OCI-LY7 (cell line): ENCODE measurements at regions of chr17 and their contacts with region 1.

Region 1: DNA sequence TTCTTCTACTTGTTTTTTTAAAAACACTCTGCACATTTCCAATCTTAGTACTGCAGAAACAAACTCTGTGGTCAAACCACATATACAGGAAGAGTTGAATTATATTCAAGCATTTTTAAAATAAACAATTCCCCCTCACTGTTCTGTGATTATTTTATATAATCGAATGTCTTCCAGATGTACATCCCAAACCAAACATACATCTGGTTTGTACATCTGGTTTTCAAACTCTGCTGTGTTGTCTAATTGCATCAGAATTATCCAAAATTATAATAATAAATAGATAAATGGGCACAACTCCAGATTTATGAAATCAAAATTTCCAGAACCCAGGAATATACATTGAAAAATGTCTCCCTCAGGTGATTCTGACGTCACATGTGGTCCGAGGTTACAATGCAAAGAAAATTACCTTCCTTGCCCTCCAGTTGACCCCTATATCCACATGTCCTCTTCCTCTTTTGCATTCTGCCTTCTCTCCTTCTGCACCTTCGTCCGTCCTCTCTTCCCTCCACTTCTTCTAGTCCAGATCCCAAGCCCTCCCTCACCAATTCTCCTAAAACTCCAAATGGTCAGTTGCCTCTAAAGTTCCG is 13.3 kb upstream of the CCDC144A start:
- DNase-seq: no peak
- H3K4me3 ChIP-seq: no peak overlapping the region
- H3K27ac ChIP-seq: no peak overlapping the region
- H3K4me1 ChIP-seq: no peaks in the 10 kb centered on the region
- CTCF ChIP-seq: no peak

Region 2: DNA sequence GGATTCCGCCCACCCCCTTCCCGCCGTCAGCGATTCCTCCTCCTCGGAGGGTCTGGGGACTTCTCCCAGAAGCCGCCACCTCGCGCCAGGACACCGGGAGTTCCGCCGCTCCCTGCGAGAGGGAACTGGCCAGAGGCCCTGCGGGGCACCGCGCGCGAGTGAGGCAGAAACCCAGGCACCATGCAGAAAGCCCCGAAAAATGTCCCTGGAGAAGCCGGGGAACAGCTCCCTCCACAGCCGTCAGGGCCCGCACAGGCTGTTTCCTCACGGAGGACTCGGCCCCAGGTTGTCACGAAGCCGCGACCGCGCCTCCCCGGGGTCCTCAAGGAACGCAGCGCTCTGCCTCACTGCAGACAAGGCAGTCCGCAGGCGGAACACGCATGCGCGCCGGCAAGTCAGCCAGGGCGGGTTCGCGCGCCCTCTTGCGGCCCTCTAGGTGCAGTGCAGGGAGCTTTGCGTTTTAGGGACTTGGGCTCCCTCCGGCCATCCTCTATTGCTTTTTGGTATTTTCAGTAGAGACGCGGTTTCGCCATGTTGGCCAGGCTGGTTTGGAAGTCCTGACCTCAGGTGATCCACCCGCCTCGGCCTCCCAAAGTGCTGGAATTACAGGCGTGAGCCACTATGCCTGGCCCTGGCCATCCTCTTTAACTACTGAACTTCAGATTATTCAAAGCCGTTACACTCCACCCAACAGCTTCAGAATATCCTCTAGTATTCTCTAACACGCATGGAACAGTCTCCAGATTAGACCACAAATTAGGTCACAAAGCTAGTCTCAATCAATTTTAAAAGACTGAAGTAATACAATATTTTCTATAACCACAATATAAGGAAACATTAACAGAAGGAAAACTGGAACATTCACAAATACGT is 87.4 kb before region 1 on chr17:
- CTCF ChIA-PET with region 1: no interaction called
- POLR2A ChIA-PET with region 1: no interaction called
- intact Hi-C with region 1: loop called (anchors 5 kb)
- DNase-seq: peak; percentile 74
- H3K4me3 ChIP-seq: no peak overlapping the region
- H3K27ac ChIP-seq: no peak overlapping the region
- H3K4me1 ChIP-seq: no peaks in the 10 kb centered on the region
- CTCF ChIP-seq: peak; percentile 86